ENCODE measurements at regions of chr15 and their contacts with region 1.

Region 1: DNA sequence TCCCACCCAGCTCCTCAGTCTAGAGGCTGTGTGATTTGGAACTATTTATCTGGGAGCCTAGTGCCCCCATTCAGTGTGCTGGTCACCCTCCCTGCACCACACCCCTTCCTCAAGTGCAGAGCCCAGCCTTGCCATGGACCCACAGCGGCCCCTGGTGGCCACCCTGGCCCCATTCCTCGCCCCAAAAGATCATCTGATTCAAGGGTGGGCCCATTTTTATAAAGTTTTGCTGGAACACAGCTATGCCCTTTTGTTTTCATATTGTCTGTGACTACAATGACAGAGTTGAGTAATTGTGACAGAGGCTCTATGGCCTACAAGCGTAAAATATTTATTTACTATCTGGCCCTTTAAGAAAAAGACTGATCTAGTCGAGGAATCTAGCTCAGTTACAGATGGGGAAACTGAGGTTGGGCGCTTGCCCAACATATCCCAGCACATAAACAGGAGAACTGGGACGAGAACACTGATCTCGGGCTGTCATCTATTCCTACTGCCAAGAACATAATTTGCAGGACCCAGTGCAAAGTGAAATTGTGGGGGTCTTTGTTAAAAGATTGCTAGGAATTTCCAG is 1.8 kb downstream of the FES start:
- DNase-seq: peak; percentile 95
- H3K4me3 ChIP-seq: peak overlapping the region; percentile 38 to 80 (median 60)
- H3K27ac ChIP-seq: peak overlapping the region; percentile 64 to 98 (median 96)
- H3K4me1 ChIP-seq: peaks cover 34 to 90% (median 80%) of the 10 kb centered on the region in 6 donors
- H3K27me3 ChIP-seq: peaks cover 0 to 11% (median 0%) of the 10 kb centered on the region in 7 donors
- CTCF ChIP-seq: peak; percentile 92 to 99 (median 96)
- POLR2A ChIP-seq: no peak

Region 2: DNA sequence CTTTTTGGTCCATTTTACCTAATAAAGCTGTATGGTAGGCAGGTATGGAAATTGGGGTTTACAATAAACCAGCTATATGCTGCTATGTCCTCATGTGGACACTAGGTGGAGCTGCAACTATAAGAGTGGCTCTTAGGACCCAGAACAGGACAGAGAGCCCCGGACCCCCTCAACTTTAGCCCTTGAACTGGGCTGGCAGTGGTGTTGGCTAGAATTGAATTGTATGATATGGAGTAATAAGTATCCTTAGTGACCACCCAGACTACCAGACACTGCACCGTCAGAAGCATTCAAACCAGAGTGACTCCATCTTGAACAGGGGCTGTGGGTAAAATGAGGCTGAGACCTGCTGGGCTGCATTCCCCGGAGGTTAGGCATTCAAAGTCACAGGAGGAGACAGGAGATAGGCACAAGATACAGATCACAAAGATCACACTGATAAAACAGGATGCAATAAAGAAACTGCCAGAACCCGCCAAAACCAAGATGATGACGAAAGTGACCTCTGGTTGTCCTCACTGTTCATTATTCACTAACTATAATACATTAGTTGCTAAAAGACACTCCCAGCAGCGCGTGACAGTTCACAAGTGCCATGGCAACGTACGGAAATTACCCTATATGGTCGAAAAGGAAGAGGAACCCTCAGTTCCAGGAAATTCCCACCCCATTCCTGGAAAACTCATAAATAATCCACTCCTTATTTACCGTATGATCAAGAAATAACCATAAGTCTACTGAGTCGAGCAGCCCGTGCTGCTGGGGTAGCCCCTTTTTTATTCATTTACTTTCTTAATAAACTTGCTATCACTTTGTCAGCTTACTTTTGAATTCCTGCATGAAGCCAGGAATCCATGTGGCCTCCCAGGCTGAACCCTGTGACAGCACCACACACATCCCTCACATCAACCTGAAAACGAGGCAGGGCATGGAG is 237.7 kb before region 1 on chr15:
- intact Hi-C with region 1: loop called (anchors 1 kb)
- DNase-seq: no peak
- H3K4me3 ChIP-seq: peak overlapping the region in 1 of 8 donors; percentile 26
- H3K27ac ChIP-seq: peak overlapping the region; percentile 1 to 83 (median 80)
- H3K4me1 ChIP-seq: peaks cover 10 to 38% (median 25%) of the 10 kb centered on the region in 6 donors
- H3K27me3 ChIP-seq: peaks cover 0 to 9% (median 0%) of the 10 kb centered on the region in 7 donors
- CTCF ChIP-seq: peak; percentile 79 to 94 (median 91)
- POLR2A ChIP-seq: no peak

Region 3: DNA sequence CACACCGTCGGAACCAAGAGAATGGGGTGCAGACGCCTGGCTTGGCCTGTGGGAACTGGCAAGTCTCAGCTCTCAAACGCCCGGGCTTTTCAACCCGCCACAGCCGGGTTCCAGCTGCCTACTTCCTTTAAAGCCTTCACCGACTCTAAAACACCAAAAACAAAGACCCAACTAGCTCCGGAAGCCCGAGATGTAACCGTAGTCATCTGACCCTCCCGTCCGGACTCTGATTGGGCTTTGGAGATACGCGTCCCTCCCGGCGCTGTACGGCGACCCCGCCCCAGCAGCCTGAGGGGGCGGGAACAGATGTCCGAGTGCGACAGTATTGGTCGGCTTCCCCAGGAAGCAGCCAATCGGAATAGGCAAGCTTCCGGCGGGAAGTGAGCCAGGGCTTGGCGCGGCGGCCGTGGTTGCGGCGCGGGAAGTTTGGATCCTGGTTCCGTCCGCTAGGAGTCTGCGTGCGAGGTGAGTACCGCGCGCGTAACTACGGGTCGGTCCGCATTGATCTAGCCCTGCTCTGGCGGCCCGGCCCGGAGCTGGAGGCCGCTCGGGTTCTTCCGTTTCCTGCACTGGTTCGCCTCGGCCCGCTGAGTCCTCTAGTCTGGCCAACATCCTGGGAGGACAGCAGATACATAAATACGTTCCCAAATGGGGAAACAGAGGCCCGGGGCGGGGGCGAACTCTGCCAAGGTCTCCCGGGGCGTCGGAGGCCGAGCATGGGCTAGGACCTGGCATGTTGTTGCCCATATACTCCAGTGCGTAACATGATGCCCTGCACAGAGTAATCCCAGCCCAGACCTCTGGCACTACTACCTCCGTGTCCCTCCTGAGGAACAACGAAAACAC is 168.9 kb before region 1 on chr15 and contains the start of gene BLM:
- intact Hi-C with region 1: loop called (anchors 5 kb)
- DNase-seq: peak; percentile 98
- H3K4me3 ChIP-seq: peak within 1 kb of the TSS; percentile 56 to 87 (median 77)
- H3K27ac ChIP-seq: peak within 1 kb of the TSS; percentile 91 to 97 (median 95)
- H3K4me1 ChIP-seq: peaks cover 6 to 38% (median 23%) of the 10 kb centered on the region in 6 donors
- H3K27me3 ChIP-seq: no peaks in the 10 kb centered on the region
- CTCF ChIP-seq: peak in 9 of 11 experiments; percentile 46 to 85 (median 66)
- POLR2A ChIP-seq: peak; percentile 33 to 60 (median 58)
- total RNA-seq, gene BLM: 6.2 to 12.0 (median 8.0) TPM

Region 4: DNA sequence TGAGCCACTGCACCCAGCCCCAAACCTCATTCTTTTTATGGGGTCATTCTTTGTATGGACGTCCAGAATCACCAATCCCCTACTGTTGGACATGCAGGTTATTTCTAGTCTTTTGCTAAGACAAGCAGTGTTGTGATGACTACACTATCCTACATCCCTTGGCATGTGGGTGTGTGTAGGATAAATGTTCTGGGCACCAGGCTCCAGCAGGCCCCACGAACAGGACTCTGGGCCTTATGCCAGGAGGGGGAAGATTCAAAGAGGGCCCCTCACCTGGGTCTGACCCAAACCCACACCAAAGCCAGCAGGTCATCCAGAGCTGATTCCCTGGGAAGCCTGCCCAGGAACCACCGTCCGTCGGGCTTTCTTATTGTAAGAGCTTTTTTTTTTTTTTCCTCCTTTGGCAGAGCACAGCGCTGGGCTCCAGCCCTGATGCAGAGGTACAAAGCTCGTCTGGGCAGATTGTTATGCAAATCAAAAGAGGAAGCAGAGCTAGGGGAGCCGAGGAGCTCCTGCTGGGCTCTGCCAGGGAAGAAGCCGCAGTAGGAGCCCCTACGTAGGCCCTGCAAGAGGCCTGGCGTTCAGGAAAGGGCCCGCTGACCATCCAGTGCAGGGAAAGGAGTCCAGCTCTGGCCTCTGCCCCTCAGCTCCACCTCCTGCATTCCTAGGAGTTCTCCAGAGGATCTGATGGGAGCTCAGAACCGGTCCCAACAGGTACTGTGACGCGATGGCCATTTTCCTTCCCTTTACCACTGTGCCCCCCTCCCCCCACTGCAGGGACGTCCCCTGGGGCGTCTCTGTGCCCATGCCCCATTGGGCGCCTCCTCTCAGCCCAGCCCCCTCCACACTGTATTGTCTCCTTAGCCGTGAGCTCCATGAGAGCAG is 46.7 kb before region 1 on chr15:
- intact Hi-C with region 1: loop called (anchors 10 kb)
- DNase-seq: peak; percentile 87
- H3K4me3 ChIP-seq: peak overlapping the region in 3 of 8 donors; percentile 3 to 58 (median 9)
- H3K27ac ChIP-seq: peak overlapping the region in 7 of 8 donors; percentile 58 to 88 (median 75)
- H3K4me1 ChIP-seq: peaks cover 11 to 67% (median 45%) of the 10 kb centered on the region in 6 donors
- H3K27me3 ChIP-seq: no peaks in the 10 kb centered on the region
- CTCF ChIP-seq: no peak
- POLR2A ChIP-seq: no peak